ENCODE measurements at regions of chr2 and their contacts with region 1.

Region 1: GRCh38 chr2:102020596-102021181 is 28.9 kb downstream of the IL1R2 start:
- DNase-seq: peak; percentile 91
- H3K4me3 Mint-ChIP-seq: no peak overlapping the region
- H3K27ac Mint-ChIP-seq: peak overlapping the region; percentile 66
- H3K4me1 Mint-ChIP-seq: peaks cover 71% of the 10 kb centered on the region
- H3K27me3 Mint-ChIP-seq: peaks cover 2% of the 10 kb centered on the region

Region 2: GRCh38 chr2:101931404-101931803 is 89.3 kb before region 1 on chr2:
- CTCF ChIA-PET with region 1: no interaction called
- POLR2A ChIA-PET with region 1: no interaction called
- intact Hi-C with region 1: no loop called
- DNase-seq: peak; percentile 25
- H3K4me3 Mint-ChIP-seq: no peak overlapping the region
- H3K27ac Mint-ChIP-seq: no peak overlapping the region
- H3K4me1 Mint-ChIP-seq: peaks cover 7% of the 10 kb centered on the region
- H3K27me3 Mint-ChIP-seq: peaks cover 11% of the 10 kb centered on the region

Region 3: DNA sequence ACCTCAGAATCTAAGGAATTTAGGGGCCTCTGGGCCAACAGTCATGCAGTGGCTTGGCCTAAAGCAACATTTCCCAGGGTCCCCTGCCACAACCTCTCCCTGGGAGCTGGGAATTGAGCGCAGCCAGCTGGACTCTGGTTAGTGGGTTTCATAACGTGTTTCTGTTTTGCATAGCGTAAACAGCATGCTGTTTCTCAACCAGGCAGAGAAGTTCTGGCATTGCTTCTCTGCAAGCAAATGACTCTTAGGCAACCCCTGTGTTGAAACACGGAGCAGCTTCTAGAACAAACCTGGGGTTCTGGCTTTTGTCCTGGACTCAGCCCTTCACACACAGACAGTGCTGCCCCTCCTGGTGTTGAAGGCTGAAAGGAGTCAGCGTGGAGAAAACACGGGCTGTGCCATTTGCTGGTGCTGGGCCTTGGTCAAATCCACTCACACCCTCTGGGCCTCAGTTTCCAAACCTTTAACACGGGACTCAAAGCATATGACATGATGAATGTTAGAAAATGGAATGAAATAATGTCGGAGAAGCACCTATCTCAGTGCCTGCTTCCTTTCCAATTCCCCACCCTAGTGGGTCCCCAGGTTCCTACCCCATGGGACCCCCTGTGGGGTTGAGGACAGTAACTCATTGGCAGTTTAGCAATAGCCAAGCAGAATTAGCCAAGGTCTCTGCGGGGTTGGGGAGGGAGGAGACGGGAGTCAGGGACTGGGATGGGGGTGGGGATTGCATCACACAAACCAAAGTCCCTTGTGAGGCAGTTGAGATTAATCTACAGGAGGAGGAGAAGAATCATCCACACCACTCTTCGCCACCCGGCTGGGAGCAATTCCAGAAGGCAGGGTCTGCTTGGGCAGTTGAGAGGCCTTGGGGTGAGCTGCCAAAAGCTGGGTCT is 59.1 kb before region 1 on chr2:
- CTCF ChIA-PET with region 1: no interaction called
- POLR2A ChIA-PET with region 1: no interaction called
- intact Hi-C with region 1: no loop called
- DNase-seq: no peak
- H3K4me3 Mint-ChIP-seq: no peak overlapping the region
- H3K27ac Mint-ChIP-seq: no peak overlapping the region
- H3K4me1 Mint-ChIP-seq: peaks cover 4% of the 10 kb centered on the region
- H3K27me3 Mint-ChIP-seq: no peaks in the 10 kb centered on the region

Region 4: DNA sequence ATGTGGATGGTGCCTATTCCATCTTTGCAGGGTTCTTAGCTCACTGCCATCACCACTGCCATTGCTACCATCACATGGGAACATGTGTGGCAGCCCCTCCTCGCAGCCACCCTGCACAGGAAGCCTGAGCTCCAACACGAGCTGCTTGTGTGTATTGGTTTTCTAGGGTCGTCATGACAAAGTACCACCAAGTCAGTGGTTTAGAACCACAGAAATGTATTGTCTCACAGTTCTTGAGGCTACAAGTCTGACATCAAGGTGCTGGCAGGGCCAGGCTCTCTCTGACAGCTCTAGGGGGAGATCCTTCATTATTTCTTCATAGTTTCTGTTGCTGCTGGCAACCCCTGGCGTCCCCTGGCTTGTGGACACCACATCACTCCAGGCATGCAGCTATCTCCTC is 39.2 kb before region 1 on chr2:
- CTCF ChIA-PET with region 1: no interaction called
- POLR2A ChIA-PET with region 1: no interaction called
- intact Hi-C with region 1: no loop called
- DNase-seq: no peak
- H3K4me3 Mint-ChIP-seq: no peak overlapping the region
- H3K27ac Mint-ChIP-seq: no peak overlapping the region
- H3K4me1 Mint-ChIP-seq: no peaks in the 10 kb centered on the region
- H3K27me3 Mint-ChIP-seq: peaks cover 1% of the 10 kb centered on the region

Region 5: DNA sequence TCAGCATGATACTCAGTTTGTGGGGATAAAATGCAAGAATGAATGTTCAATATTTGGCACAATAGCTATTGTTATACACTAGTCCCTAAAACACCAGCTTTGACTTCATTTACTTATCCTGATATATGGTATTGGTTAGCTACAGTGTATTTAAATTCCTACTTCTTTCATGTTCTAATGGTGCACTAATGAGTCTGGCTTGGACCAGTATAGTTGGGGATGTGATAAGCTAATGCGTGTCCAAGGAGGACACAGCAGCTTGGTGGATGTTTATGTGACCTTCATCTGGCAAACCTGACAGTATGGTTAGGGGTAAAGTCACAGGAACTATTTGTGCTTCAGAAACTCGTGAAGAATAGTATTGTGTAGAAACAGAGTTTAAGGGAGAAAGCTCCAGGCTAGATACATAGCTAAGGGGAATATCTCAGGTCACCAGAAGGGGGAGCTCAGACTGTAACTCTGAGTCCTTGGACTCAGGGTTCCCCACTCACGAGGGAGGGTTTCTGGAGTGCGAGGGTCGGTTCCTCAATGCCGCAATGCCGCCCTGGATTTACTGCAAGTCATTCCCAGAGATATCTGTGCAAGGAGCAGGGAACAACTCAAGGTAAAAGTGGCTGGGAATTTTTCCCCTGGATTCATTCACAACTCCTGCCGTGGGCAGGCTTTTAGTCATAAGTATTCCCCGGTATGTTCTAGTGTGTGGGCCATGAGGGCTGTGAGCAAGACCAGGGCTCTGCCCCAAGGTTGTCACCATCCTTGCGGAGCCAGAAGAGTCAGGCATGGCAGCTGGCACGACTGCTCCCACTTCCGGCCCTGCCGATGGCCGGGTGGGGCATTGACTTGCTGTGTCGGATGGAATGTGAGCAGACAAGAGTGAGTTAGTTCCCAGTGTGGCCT is 14.5 kb before region 1 on chr2:
- CTCF ChIA-PET with region 1: interaction called, 48 read pairs
- POLR2A ChIA-PET with region 1: no interaction called
- intact Hi-C with region 1: loop called (anchors 1 kb)
- DNase-seq: peak; percentile 51
- H3K4me3 Mint-ChIP-seq: peak overlapping the region; percentile 33
- H3K27ac Mint-ChIP-seq: no peak overlapping the region
- H3K4me1 Mint-ChIP-seq: peaks cover 21% of the 10 kb centered on the region
- H3K27me3 Mint-ChIP-seq: peaks cover 1% of the 10 kb centered on the region

Region 6: DNA sequence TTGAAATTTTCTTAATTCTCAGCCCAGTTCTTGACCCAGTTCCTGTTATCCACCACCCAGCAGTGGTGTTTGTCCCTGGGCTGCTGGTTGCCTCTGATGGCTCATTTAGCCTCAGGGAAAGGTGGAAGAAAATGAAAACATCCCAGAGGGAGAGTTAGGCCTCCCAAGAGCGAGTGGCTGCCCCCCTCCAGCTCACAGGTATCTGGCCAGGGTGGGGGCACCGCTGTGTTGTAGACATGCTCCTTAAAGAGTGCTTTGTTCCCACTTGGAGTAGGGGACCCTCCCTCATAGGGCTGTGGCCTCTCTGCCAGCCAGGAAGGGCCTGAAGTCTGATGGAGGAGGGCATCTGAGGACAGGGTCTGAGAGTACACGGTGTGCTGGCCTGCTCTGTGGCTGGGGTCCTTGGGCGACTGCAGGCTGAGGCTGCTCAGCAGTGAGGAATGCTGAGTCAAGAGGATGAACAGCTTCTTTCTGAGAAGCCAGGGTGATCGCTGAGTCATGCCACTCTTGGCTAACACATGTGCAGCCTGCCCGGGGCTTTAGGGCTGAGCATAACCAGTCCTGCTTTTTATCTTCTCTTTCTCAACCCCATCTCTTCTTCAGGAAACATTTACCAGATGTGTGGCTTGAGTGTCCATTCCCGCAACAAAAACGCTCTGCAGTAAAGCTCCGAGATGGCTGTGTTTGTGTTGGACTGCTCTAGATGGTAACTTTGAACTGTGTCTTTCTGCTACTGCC is 43.4 kb after region 1 on chr2:
- CTCF ChIA-PET with region 1: interaction called, 20 read pairs
- POLR2A ChIA-PET with region 1: interaction called, 3 read pairs
- intact Hi-C with region 1: no loop called
- DNase-seq: peak; percentile 81
- H3K4me3 Mint-ChIP-seq: no peak overlapping the region
- H3K27ac Mint-ChIP-seq: peak overlapping the region; percentile 88
- H3K4me1 Mint-ChIP-seq: peaks cover 44% of the 10 kb centered on the region
- H3K27me3 Mint-ChIP-seq: peaks cover 6% of the 10 kb centered on the region

Region 7: GRCh38 chr2:102126651-102127050 is 106.0 kb after region 1 on chr2:
- CTCF ChIA-PET with region 1: interaction called, 11 read pairs
- POLR2A ChIA-PET with region 1: no interaction called
- intact Hi-C with region 1: no loop called
- DNase-seq: no peak
- H3K4me3 Mint-ChIP-seq: no peak overlapping the region
- H3K27ac Mint-ChIP-seq: peak overlapping the region; percentile 90
- H3K4me1 Mint-ChIP-seq: peaks cover 38% of the 10 kb centered on the region
- H3K27me3 Mint-ChIP-seq: peaks cover 12% of the 10 kb centered on the region

Region 8: DNA sequence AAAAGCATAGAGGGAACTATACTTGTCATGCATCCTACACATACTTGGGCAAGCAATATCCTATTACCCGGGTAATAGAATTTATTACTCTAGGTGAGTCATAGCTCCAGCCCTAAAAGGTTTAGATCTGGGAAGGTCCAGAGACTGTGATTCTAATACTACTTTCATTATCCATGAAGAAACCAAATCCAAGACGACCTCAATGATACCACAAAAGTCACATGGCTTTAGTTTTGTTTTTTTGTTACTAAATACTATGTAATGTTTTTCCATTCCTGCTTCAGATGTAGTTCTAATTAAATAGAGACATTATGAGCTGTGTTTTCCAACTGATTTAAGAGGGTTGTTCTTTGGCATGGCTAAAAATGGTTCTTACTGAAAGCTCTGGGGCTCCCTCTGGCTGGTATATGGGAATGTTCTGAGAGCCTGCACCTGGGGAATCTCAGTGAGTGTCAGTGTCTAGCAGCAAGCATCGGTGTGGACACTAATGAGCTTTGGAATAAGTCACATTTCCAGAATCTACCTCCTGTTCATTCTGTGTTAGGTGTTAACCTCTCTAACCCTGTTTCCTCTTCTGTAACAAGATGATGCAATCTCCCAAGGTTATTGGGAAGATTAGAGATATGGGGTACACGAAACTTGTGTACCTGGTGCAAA is 145.6 kb after region 1 on chr2:
- CTCF ChIA-PET with region 1: interaction called, 24 read pairs
- POLR2A ChIA-PET with region 1: no interaction called
- intact Hi-C with region 1: loop called (anchors 1 kb)
- DNase-seq: no peak
- H3K4me3 Mint-ChIP-seq: no peak overlapping the region
- H3K27ac Mint-ChIP-seq: no peak overlapping the region
- H3K4me1 Mint-ChIP-seq: peaks cover 5% of the 10 kb centered on the region
- H3K27me3 Mint-ChIP-seq: no peaks in the 10 kb centered on the region

Region 9: GRCh38 chr2:102251042-102251848 is 230.6 kb after region 1 on chr2:
- CTCF ChIA-PET with region 1: interaction called, 14 read pairs
- POLR2A ChIA-PET with region 1: no interaction called
- intact Hi-C with region 1: no loop called
- DNase-seq: peak; percentile 83
- H3K4me3 Mint-ChIP-seq: peak overlapping the region; percentile 66
- H3K27ac Mint-ChIP-seq: peak overlapping the region; percentile 64
- H3K4me1 Mint-ChIP-seq: peaks cover 36% of the 10 kb centered on the region
- H3K27me3 Mint-ChIP-seq: no peaks in the 10 kb centered on the region

Region 10: DNA sequence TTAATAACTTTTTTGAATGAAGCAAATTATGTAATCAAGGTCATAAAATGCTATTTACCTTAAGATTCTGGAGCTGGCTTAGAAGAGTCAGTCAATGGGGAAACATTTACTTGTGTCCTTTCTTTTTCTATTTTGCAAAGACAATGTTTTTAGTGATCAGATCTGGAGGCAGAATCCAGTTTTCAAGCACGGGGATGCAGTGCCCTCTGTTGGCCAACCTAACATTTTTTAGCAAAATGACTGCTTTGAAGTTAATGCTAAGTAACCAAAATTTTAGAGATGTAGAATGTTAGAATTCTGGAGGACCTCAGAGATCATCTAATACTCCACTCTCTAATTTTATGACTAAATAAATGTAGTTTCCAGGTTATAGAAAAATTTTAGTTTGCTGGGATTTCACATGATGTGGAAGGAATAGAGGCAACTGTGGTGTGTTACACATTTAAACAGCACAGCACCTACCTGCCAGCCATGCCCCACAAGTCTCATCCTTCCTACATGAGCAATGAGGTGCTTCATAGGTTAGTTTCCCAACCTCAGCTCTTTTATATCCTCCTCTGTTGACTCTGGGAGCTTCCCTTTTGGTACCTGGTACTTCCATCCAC is 428.8 kb after region 1 on chr2:
- CTCF ChIA-PET with region 1: interaction called, 19 read pairs
- POLR2A ChIA-PET with region 1: no interaction called
- intact Hi-C with region 1: loop called (anchors 5 kb)
- DNase-seq: peak; percentile 82
- H3K4me3 Mint-ChIP-seq: no peak overlapping the region
- H3K27ac Mint-ChIP-seq: no peak overlapping the region
- H3K4me1 Mint-ChIP-seq: no peaks in the 10 kb centered on the region
- H3K27me3 Mint-ChIP-seq: peaks cover 1% of the 10 kb centered on the region

Measured in activated CD4-positive, alpha-beta memory T cell treated with anti-CD3 and anti-CD28 coated beads for 36 hours (primary cell).